B cell (primary cell): ENCODE measurements at regions of chr12 and their contacts with region 1.

Region 1: GRCh38 chr12:26937875-26938700 is at the starts of genes FGFR1OP2 and INTS13:
- DNase-seq: peak; percentile 97
- ATAC-seq: peak; percentile 91
- H3K4me3 ChIP-seq: peak within 1 kb of the TSS; percentile 72 to 100 (median 98)
- H3K4me3 Mint-ChIP-seq: peak within 1 kb of the TSS; percentile 99
- H3K27ac ChIP-seq: peak within 1 kb of the TSS; percentile 88 to 96
- H3K27ac Mint-ChIP-seq: peak within 1 kb of the TSS; percentile 99
- H3K4me1 ChIP-seq: peaks cover 18 to 57% of the 10 kb centered on the region in 2 donors
- H3K4me1 Mint-ChIP-seq: peaks cover 64% of the 10 kb centered on the region
- H3K27me3 ChIP-seq: no peaks in the 10 kb centered on the region
- H3K27me3 Mint-ChIP-seq: no peaks in the 10 kb centered on the region
- CTCF ChIP-seq: no peak
- total RNA-seq, gene FGFR1OP2: 64.3 and 67.3 TPM in 2 replicates
- total RNA-seq, gene INTS13: 15.6 and 16.2 TPM in 2 replicates

Region 2: GRCh38 chr12:27142101-27142721 is 204.1 kb after region 1 on chr12:
- CTCF ChIA-PET with region 1: no interaction called
- POLR2A ChIA-PET with region 1: no interaction called
- intact Hi-C with region 1: loop called (anchors 10 kb)
- DNase-seq: peak; percentile 66
- ATAC-seq: peak; percentile 63
- H3K4me3 ChIP-seq: no peak overlapping the region
- H3K4me3 Mint-ChIP-seq: no peak overlapping the region
- H3K27ac ChIP-seq: no peak overlapping the region
- H3K27ac Mint-ChIP-seq: no peak overlapping the region
- H3K4me1 ChIP-seq: no peaks in the 10 kb centered on the region
- H3K4me1 Mint-ChIP-seq: peaks cover 8% of the 10 kb centered on the region
- H3K27me3 ChIP-seq: no peaks in the 10 kb centered on the region
- H3K27me3 Mint-ChIP-seq: no peaks in the 10 kb centered on the region
- CTCF ChIP-seq: peak; percentile 83

Region 3: DNA sequence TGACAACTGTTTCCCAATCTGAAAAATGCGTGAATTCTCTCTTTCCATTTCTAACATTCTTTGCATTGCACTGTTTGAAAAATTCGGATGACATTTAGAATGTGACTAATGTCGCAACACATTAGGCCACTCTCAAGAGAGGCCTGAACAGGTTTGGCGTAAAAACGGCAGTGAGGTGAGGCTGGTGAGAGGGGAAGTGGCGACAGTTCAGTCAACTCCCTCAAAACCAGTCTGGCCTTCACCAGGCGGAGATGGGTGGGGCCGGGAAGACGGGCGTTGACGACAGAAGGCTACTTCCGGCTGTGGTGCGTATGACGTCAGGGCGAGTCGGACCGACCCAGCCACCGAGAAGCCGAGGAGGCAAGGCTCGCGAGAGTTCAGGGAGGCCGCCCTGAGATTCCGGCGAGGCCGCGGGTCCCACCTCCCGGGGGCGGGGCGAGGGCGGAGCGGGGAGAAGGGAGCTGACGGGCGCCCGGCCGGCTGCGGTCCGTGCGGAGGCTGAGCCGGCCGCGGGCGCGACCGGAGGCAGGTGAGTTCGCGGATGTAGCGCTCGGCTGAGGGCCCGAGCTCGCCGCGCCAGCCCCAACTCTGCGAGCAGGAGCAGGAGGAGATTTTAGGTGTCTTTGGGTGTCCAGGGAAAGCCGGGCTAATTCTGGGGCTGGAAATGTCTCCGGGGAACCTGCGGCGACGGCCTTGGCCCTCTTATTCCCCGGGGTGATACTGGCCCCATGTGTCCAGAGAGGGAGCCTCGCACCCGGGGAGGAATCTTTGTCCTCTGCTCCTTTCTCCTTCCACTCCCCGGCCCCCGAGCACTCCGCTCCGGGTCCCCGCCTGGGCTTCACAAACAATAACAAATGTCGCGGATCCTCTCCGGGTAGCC is 306.0 kb after region 1 on chr12 and contains the start of gene STK38L:
- CTCF ChIA-PET with region 1: no interaction called
- POLR2A ChIA-PET with region 1: no interaction called
- intact Hi-C with region 1: loop called (anchors 1 kb)
- DNase-seq: peak; percentile 97
- ATAC-seq: peak; percentile 97
- H3K4me3 ChIP-seq: peak within 1 kb of the TSS; percentile 48 to 97 (median 88)
- H3K4me3 Mint-ChIP-seq: peak within 1 kb of the TSS; percentile 98
- H3K27ac ChIP-seq: peak within 1 kb of the TSS; percentile 66 to 89
- H3K27ac Mint-ChIP-seq: peak within 1 kb of the TSS; percentile 95
- H3K4me1 ChIP-seq: peaks cover 17 to 20% of the 10 kb centered on the region in 2 donors
- H3K4me1 Mint-ChIP-seq: peaks cover 38% of the 10 kb centered on the region
- H3K27me3 ChIP-seq: no peaks in the 10 kb centered on the region
- H3K27me3 Mint-ChIP-seq: no peaks in the 10 kb centered on the region
- CTCF ChIP-seq: no peak
- total RNA-seq, gene STK38L: 19.9 and 21.2 TPM in 2 replicates